ENCODE measurements at regions of chr9 and their contacts with region 1.

Region 1: GRCh38 chr9:89597711-89598625 is 6.8 kb upstream of the GADD45G start:
- DNase-seq: no peak
- ATAC-seq: peak; percentile 72
- H3K4me3 ChIP-seq: no peak overlapping the region
- H3K27ac ChIP-seq: no peak overlapping the region
- H3K4me1 ChIP-seq: no peaks in the 10 kb centered on the region
- H3K27me3 ChIP-seq: peaks cover 5 to 6% of the 10 kb centered on the region in 2 experiments
- CTCF ChIP-seq: peak; percentile 73 to 91 (median 90)
- EP300 ChIP-seq: no peak
- POLR2A ChIP-seq: no peak
- RAD21 ChIP-seq: peak; percentile 96

Region 2: GRCh38 chr9:89999534-90000370 is 401.8 kb after region 1 on chr9:
- CTCF ChIA-PET with region 1: interaction called, 7 read pairs
- POLR2A ChIA-PET with region 1: no interaction called
- RAD21 ChIA-PET with region 1: interaction called, 16 read pairs
- SMC1A ChIA-PET with region 1: interaction called, 11 read pairs
- in situ Hi-C with region 1: no loop called
- intact Hi-C with region 1: no loop called
- DNase-seq: peak; percentile 61
- ATAC-seq: peak; percentile 95
- H3K4me3 ChIP-seq: peak overlapping the region; percentile 56; the same call in 1 of the 2 replicates
- H3K27ac ChIP-seq: peak overlapping the region; percentile 62
- H3K4me1 ChIP-seq: peaks cover 12% of the 10 kb centered on the region
- H3K27me3 ChIP-seq: no peaks in the 10 kb centered on the region
- CTCF ChIP-seq: no peak
- EP300 ChIP-seq: no peak
- POLR2A ChIP-seq: peak; percentile 71
- RAD21 ChIP-seq: no peak

Region 3: GRCh38 chr9:90102292-90102901 is 504.4 kb after region 1 on chr9:
- CTCF ChIA-PET with region 1: interaction called, 282 read pairs
- POLR2A ChIA-PET with region 1: interaction called, 4 read pairs
- RAD21 ChIA-PET with region 1: interaction called, 125 read pairs
- SMC1A ChIA-PET with region 1: interaction called, 89 read pairs
- in situ Hi-C with region 1: loop called (anchors 5 kb)
- intact Hi-C with region 1: loop called (anchors 1 kb)
- DNase-seq: peak; percentile 36
- ATAC-seq: peak; percentile 100
- H3K4me3 ChIP-seq: no peak overlapping the region
- H3K27ac ChIP-seq: no peak overlapping the region
- H3K4me1 ChIP-seq: no peaks in the 10 kb centered on the region
- H3K27me3 ChIP-seq: no peaks in the 10 kb centered on the region; a peak in 2 of 4 replicates
- CTCF ChIP-seq: peak; percentile 72 to 83 (median 81); a peak in 5 of 6 replicates
- EP300 ChIP-seq: no peak
- POLR2A ChIP-seq: no peak
- RAD21 ChIP-seq: peak; percentile 91

Region 4: GRCh38 chr9:90767523-90768100 is 1169.6 kb after region 1 on chr9:
- CTCF ChIA-PET with region 1: no interaction called
- POLR2A ChIA-PET with region 1: no interaction called
- RAD21 ChIA-PET with region 1: interaction called, 4 read pairs
- SMC1A ChIA-PET with region 1: no interaction called
- in situ Hi-C with region 1: loop called (anchors 25 kb)
- intact Hi-C with region 1: loop called (anchors 10 kb)
- DNase-seq: no peak
- ATAC-seq: no peak
- H3K4me3 ChIP-seq: no peak overlapping the region
- H3K27ac ChIP-seq: no peak overlapping the region
- H3K4me1 ChIP-seq: peaks cover 20% of the 10 kb centered on the region
- H3K27me3 ChIP-seq: no peaks in the 10 kb centered on the region
- CTCF ChIP-seq: no peak
- EP300 ChIP-seq: no peak
- POLR2A ChIP-seq: no peak
- RAD21 ChIP-seq: no peak

Region 5: GRCh38 chr9:90870621-90871326 is 1272.8 kb after region 1 on chr9:
- CTCF ChIA-PET with region 1: interaction called, 6 read pairs
- POLR2A ChIA-PET with region 1: no interaction called
- RAD21 ChIA-PET with region 1: no interaction called
- SMC1A ChIA-PET with region 1: interaction called, 3 read pairs
- in situ Hi-C with region 1: loop called (anchors 25 kb)
- intact Hi-C with region 1: no loop called
- DNase-seq: peak; percentile 17
- ATAC-seq: peak; percentile 81
- H3K4me3 ChIP-seq: no peak overlapping the region
- H3K27ac ChIP-seq: no peak overlapping the region
- H3K4me1 ChIP-seq: no peaks in the 10 kb centered on the region
- H3K27me3 ChIP-seq: no peaks in the 10 kb centered on the region
- CTCF ChIP-seq: peak; percentile 84 to 89 (median 85)
- EP300 ChIP-seq: no peak
- POLR2A ChIP-seq: no peak
- RAD21 ChIP-seq: peak; percentile 95